AG04449 (cell line): ENCODE measurements at regions of chr3 and their contacts with region 1.

Region 1: DNA sequence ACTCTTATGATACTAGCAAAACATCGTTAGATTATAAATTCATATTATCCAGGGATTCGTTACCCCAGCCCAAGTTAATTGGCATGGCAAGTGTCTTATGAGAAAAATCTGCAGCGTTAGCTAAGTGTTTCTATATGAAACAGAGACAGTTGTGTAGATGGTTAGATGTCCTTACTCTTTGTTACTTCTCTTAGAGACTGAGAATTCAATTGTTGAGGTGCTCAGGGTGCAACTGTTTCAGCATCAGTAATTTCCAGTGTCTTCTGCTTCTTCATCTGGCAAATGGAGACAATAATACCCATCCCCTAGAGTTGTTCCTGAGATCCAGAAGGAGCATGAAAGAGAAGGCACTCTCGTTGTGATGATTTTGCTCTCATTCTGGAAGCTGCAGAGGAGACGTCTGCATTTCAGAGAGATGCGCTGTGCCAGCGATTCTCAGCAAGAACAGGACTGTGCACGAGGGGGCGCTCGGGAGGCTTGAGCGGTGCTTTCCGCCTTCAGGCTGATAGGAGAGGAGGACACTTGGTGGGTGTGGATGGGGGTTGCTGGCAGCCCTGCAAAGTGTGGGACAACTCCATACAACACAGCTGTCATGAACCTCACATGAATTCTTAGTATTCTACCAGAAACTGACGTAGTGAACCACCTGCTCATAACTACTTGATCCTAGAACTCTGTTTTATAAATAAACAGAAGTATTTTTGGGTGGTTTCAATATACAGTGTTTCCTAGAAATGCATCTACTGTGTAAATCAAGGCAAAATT is 39.7 kb upstream of the SPSB4 start:
- DNase-seq: no peak
- H3K4me3 ChIP-seq: no peak overlapping the region
- CTCF ChIP-seq: peak; percentile 88

Region 2: GRCh38 chr3:140972833-140973232 is 38.6 kb before region 1 on chr3:
- CTCF ChIA-PET with region 1: no interaction called
- POLR2A ChIA-PET with region 1: no interaction called
- DNase-seq: no peak
- H3K4me3 ChIP-seq: no peak overlapping the region
- CTCF ChIP-seq: peak; percentile 9

Region 3: DNA sequence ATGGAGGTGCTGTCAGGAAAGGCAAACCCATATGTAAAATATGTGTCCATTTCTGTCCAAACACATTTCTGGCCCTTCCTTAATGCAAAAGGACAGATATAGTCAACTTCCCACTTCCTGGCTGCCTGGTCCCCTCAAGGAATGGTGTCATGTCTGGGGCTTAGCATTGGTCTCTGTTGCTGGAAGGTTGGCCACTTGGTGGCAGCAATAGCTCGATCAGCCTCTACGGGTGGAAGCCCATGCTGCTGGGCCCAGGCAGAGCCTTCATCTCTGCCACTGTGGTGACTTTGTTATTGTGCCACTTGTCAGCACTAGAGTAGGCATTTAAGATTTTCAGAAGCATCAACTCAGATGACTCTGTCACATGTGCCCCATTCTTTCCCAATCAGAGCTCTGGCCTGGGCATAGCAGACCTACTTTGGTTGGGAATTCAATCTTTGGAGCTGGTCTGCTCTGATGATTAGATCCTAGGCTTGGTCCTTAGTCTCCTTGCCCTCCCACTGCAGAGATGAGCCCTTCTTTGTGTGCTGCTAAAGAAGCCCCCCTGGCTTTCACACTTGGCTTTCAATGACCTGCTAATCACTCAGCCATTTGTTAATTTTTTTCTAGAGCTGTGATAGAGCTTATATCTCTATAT is 11.3 kb before region 1 on chr3:
- CTCF ChIA-PET with region 1: interaction called, 45 read pairs
- POLR2A ChIA-PET with region 1: no interaction called
- DNase-seq: no peak
- H3K4me3 ChIP-seq: no peak overlapping the region
- CTCF ChIP-seq: peak; percentile 69